SK-N-SH (cell line): ENCODE measurements at regions of chr14 and their contacts with region 1.

Region 1: GRCh38 chr14:35404449-35405303 is at the start of gene NFKBIA:
- DNase-seq: peak; percentile 87
- H3K4me3 ChIP-seq: peak within 1 kb of the TSS; percentile 85 to 87
- H3K27ac ChIP-seq: peak within 1 kb of the TSS; percentile 92 to 98
- H3K4me1 ChIP-seq: peaks cover 25 to 33% of the 10 kb centered on the region in 2 experiments; a peak in 3 of 4 replicates
- H3K27me3 ChIP-seq: no peaks in the 10 kb centered on the region
- CTCF ChIP-seq: peak; percentile 52
- EP300 ChIP-seq: 0 out of 4 replicates have a peak, but pooled peaks of 1 of the 2 experiments have one; percentile 6
- RAD21 ChIP-seq: 0 out of 2 replicates have a peak, but pooled peaks have one; percentile 33
- polyA plus RNA-seq, gene NFKBIA: 56.3 and 56.7 TPM in 2 replicates

Region 2: GRCh38 chr14:35229495-35230089 is 175.1 kb before region 1 on chr14:
- CTCF ChIA-PET with region 1: interaction called, 25 read pairs
- POLR2A ChIA-PET with region 1: no interaction called
- DNase-seq: peak; percentile 46
- H3K4me3 ChIP-seq: no peak overlapping the region
- H3K27ac ChIP-seq: no peak overlapping the region
- H3K4me1 ChIP-seq: no peaks in the 10 kb centered on the region
- H3K27me3 ChIP-seq: no peaks in the 10 kb centered on the region
- CTCF ChIP-seq: peak; percentile 55
- EP300 ChIP-seq: no peak
- RAD21 ChIP-seq: peak; percentile 65

Region 3: DNA sequence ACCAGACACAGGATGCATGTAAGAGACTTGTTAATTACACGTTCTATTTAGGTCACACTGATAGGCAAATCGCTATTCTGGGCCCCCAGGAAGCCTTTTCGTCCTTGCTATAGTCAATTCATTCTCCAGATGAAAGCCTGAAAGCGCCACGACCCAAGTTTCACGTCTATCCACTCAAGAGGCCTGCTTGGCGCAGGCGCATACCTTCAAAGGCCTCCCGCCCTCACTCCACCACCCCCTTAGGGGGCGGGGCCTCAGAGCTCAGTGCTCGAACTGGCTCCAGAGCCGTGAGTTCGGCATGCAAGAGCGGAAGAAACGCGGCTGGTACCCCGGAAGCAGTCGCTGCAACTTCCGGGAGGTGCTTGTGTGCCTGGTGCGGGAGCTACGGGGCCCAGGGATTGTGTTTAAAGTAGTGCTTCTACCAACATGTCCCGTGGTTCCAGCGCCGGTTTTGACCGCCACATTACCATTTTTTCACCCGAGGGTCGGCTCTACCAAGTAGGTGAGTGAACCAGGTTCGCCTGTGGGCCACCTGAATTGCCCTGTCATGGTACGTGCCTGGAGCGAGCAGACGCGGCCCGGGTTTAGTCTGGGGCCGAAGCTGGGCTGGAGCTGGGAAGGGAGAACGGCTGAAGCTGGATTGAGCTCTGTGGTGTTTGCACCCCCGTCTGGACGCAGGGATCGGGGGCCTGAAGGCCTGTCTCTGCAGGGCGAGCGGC is 112.5 kb before region 1 on chr14 and contains the start of gene PSMA6:
- CTCF ChIA-PET with region 1: interaction called, 3 read pairs
- POLR2A ChIA-PET with region 1: interaction called, 21 read pairs
- DNase-seq: peak; percentile 93
- H3K4me3 ChIP-seq: peak within 1 kb of the TSS; percentile 82 to 91
- H3K27ac ChIP-seq: peak within 1 kb of the TSS; percentile 84 to 87
- H3K4me1 ChIP-seq: no peaks in the 10 kb centered on the region; a peak in 3 of 4 replicates
- H3K27me3 ChIP-seq: no peaks in the 10 kb centered on the region
- CTCF ChIP-seq: no peak
- EP300 ChIP-seq: peak in 1 of 2 experiments; percentile 21; a peak in 1 of 4 replicates
- RAD21 ChIP-seq: no peak
- polyA plus RNA-seq, gene PSMA6: 174 and 227 TPM in 2 replicates

Region 4: GRCh38 chr14:35391388-35391710 is 13.3 kb before region 1 on chr14:
- CTCF ChIA-PET with region 1: interaction called, 10 read pairs
- POLR2A ChIA-PET with region 1: interaction called, 7 read pairs
- DNase-seq: no peak
- H3K4me3 ChIP-seq: no peak overlapping the region
- H3K27ac ChIP-seq: no peak overlapping the region
- H3K4me1 ChIP-seq: peaks cover 0 to 3% of the 10 kb centered on the region in 2 experiments; a peak in 1 of 4 replicates
- H3K27me3 ChIP-seq: no peaks in the 10 kb centered on the region
- CTCF ChIP-seq: no peak
- EP300 ChIP-seq: no peak
- RAD21 ChIP-seq: no peak

Region 5: DNA sequence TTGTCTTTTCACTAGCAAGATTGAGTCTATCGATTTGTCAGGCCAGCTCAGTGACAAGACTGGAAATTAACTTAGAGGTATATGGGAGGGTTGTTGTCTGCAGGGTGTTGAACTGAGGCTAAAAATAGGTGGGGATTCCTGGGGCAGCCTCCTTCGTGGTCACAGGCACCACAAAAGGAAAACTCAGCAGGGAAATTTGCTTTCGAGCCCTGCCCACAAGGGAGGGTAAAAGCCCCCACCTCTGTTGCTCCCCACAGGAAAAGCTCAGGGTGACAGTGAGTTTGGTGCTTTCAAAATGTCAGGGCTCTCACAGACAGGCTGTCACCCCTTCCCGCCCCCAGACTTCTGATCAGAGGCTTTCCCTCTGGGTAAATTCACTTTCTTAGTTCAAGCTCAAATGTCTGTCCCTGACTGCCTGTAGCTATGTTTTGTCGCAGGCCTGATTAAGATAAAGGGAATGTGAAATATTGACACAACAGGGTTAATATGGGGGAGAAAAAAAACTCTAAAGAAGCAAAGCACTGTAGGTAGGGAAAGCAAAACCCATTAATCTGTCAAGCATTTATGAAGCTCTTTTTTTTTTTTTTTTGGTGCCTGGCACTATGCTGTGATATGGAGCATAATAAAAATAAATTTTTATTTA is 11.6 kb after region 1 on chr14:
- CTCF ChIA-PET with region 1: interaction called, 16 read pairs
- POLR2A ChIA-PET with region 1: interaction called, 6 read pairs
- DNase-seq: no peak
- H3K4me3 ChIP-seq: no peak overlapping the region
- H3K27ac ChIP-seq: no peak overlapping the region
- H3K4me1 ChIP-seq: peaks cover 35% of the 10 kb centered on the region in 2 experiments
- H3K27me3 ChIP-seq: no peaks in the 10 kb centered on the region
- CTCF ChIP-seq: no peak
- EP300 ChIP-seq: no peak
- RAD21 ChIP-seq: no peak

Region 6: GRCh38 chr14:35423621-35424020 is 18.9 kb after region 1 on chr14:
- CTCF ChIA-PET with region 1: interaction called, 17 read pairs
- POLR2A ChIA-PET with region 1: interaction called, 6 read pairs
- DNase-seq: no peak
- H3K4me3 ChIP-seq: no peak overlapping the region
- H3K27ac ChIP-seq: no peak overlapping the region
- H3K4me1 ChIP-seq: peaks cover 6 to 20% of the 10 kb centered on the region in 2 experiments; a peak in 3 of 4 replicates
- H3K27me3 ChIP-seq: no peaks in the 10 kb centered on the region
- CTCF ChIP-seq: no peak
- EP300 ChIP-seq: no peak
- RAD21 ChIP-seq: no peak

Region 7: DNA sequence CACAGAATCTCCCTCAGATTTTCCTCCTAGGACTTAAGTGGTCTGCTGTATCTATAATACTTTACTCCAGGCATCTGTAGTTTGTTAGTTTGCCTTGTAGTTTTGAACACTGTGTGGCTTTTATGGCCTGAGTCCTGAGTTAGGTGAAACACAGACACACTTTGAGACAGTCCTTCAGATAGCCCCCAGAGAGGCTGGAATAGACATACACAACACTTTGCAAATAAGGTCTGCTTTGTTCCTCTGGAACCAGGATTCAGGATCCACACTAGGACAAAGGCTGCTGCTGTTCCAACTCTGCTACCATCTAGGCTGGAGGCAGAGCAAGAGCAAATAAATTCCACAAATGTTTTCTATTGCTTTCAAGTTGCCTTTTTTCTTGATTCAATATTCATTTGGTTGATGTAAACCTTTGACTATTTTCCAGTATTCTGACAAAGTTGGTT is 87.9 kb after region 1 on chr14:
- CTCF ChIA-PET with region 1: no interaction called
- POLR2A ChIA-PET with region 1: no interaction called
- DNase-seq: no peak
- H3K4me3 ChIP-seq: no peak overlapping the region
- H3K27ac ChIP-seq: no peak overlapping the region
- H3K4me1 ChIP-seq: no peaks in the 10 kb centered on the region
- H3K27me3 ChIP-seq: no peaks in the 10 kb centered on the region
- CTCF ChIP-seq: no peak
- EP300 ChIP-seq: no peak
- RAD21 ChIP-seq: no peak